ENCODE measurements at regions of chr7 and their contacts with region 1.

Region 1: DNA sequence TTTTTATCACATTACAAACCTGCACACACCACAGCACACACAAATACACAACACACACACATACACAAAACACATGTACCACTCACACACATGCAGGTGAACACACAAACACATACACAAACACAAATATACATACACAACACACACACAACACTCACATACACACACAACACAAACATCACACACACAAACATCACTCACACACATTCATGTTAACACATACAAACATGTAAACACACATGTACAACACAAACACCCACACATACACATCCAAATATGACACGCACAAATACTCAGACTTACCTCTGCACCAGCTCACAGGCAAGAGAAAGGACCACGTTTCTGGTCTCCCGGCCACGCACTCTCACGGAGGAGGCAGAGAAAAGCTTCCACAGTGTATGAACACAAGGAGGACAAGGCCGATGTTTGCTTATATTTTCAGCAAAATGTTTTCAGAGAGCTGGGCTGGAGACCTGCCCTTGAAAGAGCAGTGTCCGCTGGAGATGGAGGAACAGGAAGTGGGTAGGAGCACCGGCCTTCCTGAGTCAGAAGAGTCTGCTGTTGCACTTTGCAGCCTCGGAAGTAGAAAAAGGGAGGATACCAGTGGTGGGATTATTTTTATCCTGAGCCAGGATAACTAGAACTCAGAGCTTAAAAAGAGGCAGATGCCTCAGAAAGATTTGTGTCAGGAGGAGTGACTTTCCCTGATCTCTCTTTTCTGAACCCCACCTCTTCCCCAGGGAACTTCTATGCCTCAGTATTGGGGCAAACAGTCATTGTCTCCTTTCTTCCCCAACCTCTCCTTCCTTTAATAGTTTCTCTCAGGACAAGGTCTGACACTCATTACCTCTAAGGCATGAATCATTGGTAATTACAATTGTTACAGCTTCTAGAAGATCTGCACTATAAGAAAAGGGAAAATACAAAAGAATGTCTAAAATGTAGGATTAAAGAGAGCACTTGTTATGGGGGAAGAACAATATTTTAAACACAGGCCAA is at the start of gene GIMAP6:
- DNase-seq: peak; percentile 74
- H3K4me3 ChIP-seq: peak within 1 kb of the TSS; percentile 7 to 80 (median 49)
- H3K27ac ChIP-seq: peak within 1 kb of the TSS; percentile 43
- H3K4me1 ChIP-seq: peaks cover 35% of the 10 kb centered on the region
- H3K27me3 ChIP-seq: no peaks in the 10 kb centered on the region
- CTCF ChIP-seq: no peak
- POLR2A ChIP-seq: peak; percentile 69
- total RNA-seq, gene GIMAP6: 85.0 and 87.8 TPM in 2 replicates

Region 2: DNA sequence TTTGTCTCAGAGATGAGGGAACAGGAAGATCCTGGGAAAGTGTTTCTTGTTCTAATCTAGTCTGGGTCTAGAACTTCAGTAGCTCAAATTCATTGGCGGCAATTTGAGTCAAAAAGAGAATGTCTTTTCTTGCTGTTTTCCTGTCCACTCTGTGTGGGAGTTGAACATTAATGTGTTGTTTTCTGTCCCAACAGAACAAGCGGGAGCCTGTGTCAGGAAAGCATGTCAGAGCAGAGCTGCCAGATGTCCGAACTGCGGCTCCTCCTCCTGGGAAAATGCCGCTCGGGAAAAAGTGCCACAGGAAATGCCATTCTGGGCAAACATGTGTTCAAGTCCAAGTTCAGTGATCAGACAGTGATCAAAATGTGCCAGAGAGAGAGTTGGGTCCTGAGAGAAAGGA is 165.7 kb before region 1 on chr7:
- CTCF ChIA-PET with region 1: no interaction called
- POLR2A ChIA-PET with region 1: no interaction called
- dilution Hi-C with region 1: no loop called
- intact Hi-C with region 1: loop called (anchors 5 kb)
- DNase-seq: peak; percentile 93
- H3K4me3 ChIP-seq: peak overlapping the region in 2 of 3 experiments; percentile 30 to 77
- H3K27ac ChIP-seq: peak overlapping the region; percentile 53
- H3K4me1 ChIP-seq: peaks cover 22% of the 10 kb centered on the region
- H3K27me3 ChIP-seq: no peaks in the 10 kb centered on the region
- CTCF ChIP-seq: no peak
- POLR2A ChIP-seq: no peak

Region 3: DNA sequence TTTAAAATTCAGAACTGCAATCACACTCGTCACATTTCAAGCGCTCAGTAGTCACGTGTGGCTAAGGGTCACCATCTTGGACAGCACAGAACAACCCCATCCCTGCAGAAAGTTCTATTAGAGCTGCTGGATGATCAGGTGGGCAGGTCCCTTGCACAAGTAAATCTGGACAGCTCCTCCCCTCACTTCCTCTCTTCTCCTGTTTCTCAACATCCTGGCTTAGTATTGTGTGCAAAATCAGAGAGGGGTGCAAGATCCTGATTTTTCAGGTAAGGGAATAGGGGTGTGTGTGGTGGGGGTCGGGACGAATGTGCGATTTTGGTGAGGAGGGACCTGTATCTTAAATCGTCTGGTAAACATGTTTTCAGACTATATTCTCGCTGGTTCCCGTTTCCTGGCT is 65.0 kb before region 1 on chr7 and contains the start of gene GIMAP4:
- CTCF ChIA-PET with region 1: no interaction called
- POLR2A ChIA-PET with region 1: interaction called, 3 read pairs
- dilution Hi-C with region 1: no loop called
- intact Hi-C with region 1: loop called (anchors 1 kb)
- DNase-seq: peak; percentile 69
- H3K4me3 ChIP-seq: peak within 1 kb of the TSS; percentile 78 to 80 (median 79)
- H3K27ac ChIP-seq: peak within 1 kb of the TSS; percentile 63
- H3K4me1 ChIP-seq: peaks cover 62% of the 10 kb centered on the region
- H3K27me3 ChIP-seq: no peaks in the 10 kb centered on the region
- CTCF ChIP-seq: no peak
- POLR2A ChIP-seq: peak; percentile 49
- total RNA-seq, gene GIMAP4: 168 and 174 TPM in 2 replicates

Region 4: GRCh38 chr7:150675714-150676113 is 43.5 kb after region 1 on chr7:
- CTCF ChIA-PET with region 1: no interaction called
- POLR2A ChIA-PET with region 1: interaction called, 3 read pairs
- dilution Hi-C with region 1: no loop called
- intact Hi-C with region 1: loop called (anchors 1 kb)
- DNase-seq: peak; percentile 43
- H3K4me3 ChIP-seq: no peak overlapping the region
- H3K27ac ChIP-seq: peak overlapping the region; percentile 48
- H3K4me1 ChIP-seq: peaks cover 19% of the 10 kb centered on the region
- H3K27me3 ChIP-seq: no peaks in the 10 kb centered on the region
- CTCF ChIP-seq: no peak
- POLR2A ChIP-seq: no peak

Region 5: DNA sequence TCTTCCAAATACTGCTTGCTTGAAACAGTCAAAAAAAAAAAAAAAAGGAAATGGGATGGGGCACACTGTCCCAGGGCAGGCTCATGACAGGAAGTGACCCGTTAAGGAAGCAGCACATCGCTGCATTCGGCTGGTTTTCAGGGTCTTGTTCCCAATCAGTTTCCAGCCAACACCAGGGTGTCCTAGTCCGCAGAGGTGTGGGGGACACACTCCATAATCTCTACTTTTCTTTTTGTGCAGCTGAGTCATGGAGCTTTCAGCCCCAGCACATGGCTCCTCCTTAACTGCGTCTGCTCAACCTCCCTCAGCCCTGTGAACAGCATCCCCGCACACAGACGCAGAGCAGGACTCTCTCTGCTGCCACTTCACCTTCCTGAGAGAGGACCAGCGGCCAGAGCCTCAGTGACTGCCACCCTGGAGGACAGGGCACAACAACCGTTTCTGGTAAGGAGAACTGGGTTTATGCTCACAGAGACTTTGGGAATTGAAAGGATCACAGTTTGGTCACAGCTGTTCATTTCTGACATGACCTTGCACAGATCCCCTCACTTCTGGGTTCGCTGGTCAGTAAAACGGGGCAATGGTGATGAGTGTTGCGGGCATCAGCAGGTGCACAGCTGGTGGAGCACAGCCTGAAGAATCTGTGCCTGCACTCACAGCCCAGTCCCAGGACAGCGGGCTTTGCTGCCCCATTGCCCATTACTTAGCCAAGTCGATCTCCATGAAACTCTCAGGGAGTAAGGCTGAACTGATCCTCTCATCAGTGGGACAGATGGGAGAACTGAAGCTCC is 105.3 kb after region 1 on chr7 and contains the start of gene GIMAP5:
- CTCF ChIA-PET with region 1: no interaction called
- POLR2A ChIA-PET with region 1: no interaction called
- dilution Hi-C with region 1: no loop called
- intact Hi-C with region 1: loop called (anchors 5 kb)
- DNase-seq: peak; percentile 48
- H3K4me3 ChIP-seq: peak within 1 kb of the TSS in 2 of 3 experiments; percentile 32 to 46
- H3K27ac ChIP-seq: no peak within 1 kb of the TSS
- H3K4me1 ChIP-seq: peaks cover 27% of the 10 kb centered on the region
- H3K27me3 ChIP-seq: no peaks in the 10 kb centered on the region
- CTCF ChIP-seq: no peak
- POLR2A ChIP-seq: no peak
- total RNA-seq, gene GIMAP5: 0.44 and 0.85 TPM in 2 replicates